Motor neuron (in vitro differentiated cells): ENCODE measurements at regions of chr18 and their contacts with region 1.

Region 1: DNA sequence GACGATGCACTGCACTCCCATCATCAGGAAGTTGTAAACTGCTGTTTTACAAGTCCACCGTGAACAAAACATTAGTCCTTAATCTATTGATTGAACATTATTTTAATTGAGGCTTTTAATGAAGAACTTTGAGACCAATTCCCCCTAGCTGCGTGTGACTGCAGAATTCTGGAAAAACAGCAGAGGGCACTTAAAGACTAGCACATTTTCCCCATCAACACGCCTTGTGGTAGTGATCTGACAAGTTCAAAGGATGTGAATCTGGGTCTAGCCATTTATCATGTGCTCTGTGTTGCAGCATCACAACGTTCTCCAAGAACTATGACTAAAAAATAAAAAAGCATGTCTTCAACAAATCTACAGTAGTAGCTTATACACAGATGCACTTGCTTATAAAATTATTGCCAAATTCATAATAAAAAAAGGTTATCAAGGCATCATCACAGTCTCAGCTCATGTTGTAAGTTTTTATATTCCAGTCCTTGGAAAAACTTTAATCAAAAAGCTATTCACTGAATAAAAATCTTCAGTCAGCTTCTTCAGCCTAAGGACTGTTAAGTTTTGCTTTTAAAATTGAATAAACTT is 35.8 kb downstream of the SKOR2 start:
- ATAC-seq: peak; percentile 63 to 93 (median 78)
- H3K4me3 ChIP-seq: no peak overlapping the region
- H3K27ac ChIP-seq: no peak overlapping the region
- H3K4me1 ChIP-seq: no peaks in the 10 kb centered on the region

Region 2: GRCh38 chr18:47748847-47749599 is 533.4 kb after region 1 on chr18:
- in situ Hi-C with region 1: loop called (anchors 5 to 25 kb)
- ATAC-seq: peak; percentile 94 to 100 (median 99)
- H3K4me3 ChIP-seq: peak overlapping the region; percentile 23 to 38 (median 25)
- H3K27ac ChIP-seq: no peak overlapping the region
- H3K4me1 ChIP-seq: no peaks in the 10 kb centered on the region